Lower leg skin (tissue), 4 donors: ENCODE measurements at regions of chr2 and their contacts with region 1.

Region 1: GRCh38 chr2:191150600-191151330 is at the start of gene STAT4:
- DNase-seq: peak in 1 of 2 donors; percentile 87
- H3K4me3 ChIP-seq: peak within 1 kb of the TSS; percentile 22
- CTCF ChIP-seq: no peak
- POLR2A ChIP-seq: no peak
- total RNA-seq, gene STAT4: 0.46 to 4.3 (median 1.3) TPM

Region 2: DNA sequence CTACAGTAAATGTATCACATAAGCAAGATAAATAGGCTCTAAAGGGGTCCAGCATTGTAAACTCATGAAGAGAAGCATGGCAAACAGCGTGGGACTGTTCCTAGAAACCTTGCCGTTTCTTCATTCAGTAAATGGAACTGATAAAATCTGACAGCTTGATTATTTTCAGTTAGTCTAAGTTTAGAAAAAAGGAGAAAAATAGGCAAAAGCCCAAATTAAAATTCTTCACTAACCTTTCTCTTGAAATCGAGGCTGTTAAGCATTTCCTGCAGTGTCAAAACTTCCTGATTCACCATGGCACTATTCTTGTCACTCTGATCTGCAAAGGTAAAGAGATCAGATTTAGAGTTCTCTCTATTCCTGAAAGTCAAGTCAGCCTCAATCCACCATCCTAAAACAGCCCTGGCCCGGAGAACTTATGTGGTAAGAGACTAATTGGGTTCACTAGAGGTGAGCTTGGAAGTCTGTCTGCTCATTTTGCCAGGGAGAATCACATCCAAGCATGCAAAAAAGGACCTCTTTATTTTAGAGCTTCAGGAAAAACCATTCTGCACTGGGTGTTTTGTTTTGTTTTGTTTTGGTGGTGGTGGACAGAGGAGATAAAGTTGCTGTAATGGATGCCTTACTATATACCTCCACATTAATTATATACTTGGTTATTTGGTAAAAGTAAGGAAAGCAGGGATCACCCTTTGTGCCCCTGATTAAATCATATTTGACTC is 84.4 kb before region 1 on chr2:
- intact Hi-C with region 1: loop called (anchors 10 kb)
- DNase-seq: no peak
- H3K4me3 ChIP-seq: no peak overlapping the region
- CTCF ChIP-seq: no peak
- POLR2A ChIP-seq: no peak

Region 3: GRCh38 chr2:192500550-192501213 is 1349.9 kb after region 1 on chr2:
- intact Hi-C with region 1: no loop called
- DNase-seq: no peak
- H3K4me3 ChIP-seq: no peak overlapping the region
- CTCF ChIP-seq: no peak
- POLR2A ChIP-seq: no peak